Activated T-helper 2 cell treated with anti-CD3 and anti-CD28 coated beads, Interferon-gamma antibody, Interleukin-2, Interleukin-4, amounts not matched to agents 10 μg/mL and 5 μg/mL and 100 μg/mL, durations not matched to agents 14 hours and 24 hours and 36 hours (primary cell): ENCODE measurements at regions of chr19 and their contacts with region 1.

Region 1: DNA sequence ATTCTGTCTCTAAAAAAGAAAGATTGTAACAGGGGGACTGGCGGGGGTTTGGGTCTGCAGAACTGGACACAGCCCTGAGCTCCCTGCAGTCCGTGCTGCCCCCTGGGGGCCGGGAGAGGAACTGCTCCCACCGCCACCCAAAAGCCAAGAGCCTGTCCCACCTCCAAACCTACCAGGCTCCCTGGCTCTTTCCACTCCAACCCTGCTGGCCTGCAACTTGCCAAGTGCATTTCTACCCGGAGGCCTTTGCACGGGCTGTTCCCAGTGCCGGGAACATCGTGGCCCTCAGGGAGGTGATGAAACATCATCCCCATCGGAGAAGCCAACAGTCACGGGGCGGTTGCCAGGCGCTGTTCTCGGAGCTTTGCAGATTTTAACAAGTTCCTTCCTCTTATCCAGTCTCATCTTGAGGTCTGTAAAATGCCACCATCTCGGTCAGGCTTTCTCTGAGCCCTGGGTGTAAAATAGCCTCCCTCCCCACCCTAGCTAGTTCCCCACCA is 50.7 kb downstream of the SMIM24 start:
- DNase-seq: peak; percentile 68
- H3K4me3 Mint-ChIP-seq: no peak overlapping the region
- H3K27ac Mint-ChIP-seq: no peak overlapping the region
- H3K4me1 Mint-ChIP-seq: peaks cover 5% of the 10 kb centered on the region
- H3K27me3 Mint-ChIP-seq: no peaks in the 10 kb centered on the region

Region 2: DNA sequence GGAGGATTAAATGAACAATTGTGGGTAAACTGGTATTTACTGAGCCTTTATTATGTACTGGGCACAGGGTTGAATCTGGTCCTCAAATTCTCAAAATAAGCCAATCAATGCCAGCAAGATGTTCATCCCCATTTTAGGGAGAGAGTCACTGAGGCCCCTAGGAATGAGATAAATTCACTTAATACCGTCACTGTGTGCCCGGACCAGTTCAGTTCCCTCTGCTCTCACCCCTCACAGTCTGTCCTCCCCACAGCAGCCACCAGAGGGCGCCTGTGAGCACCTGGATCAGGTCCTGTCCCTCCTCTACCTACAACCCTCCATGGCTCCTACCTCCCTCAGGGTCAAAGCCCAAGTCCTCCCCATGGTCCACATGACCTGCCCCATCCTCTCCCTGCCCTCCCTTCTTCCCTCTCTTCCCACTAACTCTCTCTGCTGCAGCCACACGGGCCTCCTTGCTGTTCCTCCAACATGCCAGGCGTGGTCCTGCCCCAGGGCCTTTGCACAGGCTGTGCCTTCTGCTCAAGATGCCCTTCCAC is 105.2 kb before region 1 on chr19:
- intact Hi-C with region 1: loop called (anchors 1 kb)
- DNase-seq: peak; percentile 54
- H3K4me3 Mint-ChIP-seq: no peak overlapping the region
- H3K27ac Mint-ChIP-seq: no peak overlapping the region
- H3K4me1 Mint-ChIP-seq: no peaks in the 10 kb centered on the region
- H3K27me3 Mint-ChIP-seq: peaks cover 4% of the 10 kb centered on the region

Region 3: GRCh38 chr19:3413796-3414327 is 15.8 kb before region 1 on chr19:
- intact Hi-C with region 1: no loop called
- DNase-seq: no peak
- H3K4me3 Mint-ChIP-seq: no peak overlapping the region
- H3K27ac Mint-ChIP-seq: no peak overlapping the region
- H3K4me1 Mint-ChIP-seq: no peaks in the 10 kb centered on the region
- H3K27me3 Mint-ChIP-seq: no peaks in the 10 kb centered on the region

Region 4: DNA sequence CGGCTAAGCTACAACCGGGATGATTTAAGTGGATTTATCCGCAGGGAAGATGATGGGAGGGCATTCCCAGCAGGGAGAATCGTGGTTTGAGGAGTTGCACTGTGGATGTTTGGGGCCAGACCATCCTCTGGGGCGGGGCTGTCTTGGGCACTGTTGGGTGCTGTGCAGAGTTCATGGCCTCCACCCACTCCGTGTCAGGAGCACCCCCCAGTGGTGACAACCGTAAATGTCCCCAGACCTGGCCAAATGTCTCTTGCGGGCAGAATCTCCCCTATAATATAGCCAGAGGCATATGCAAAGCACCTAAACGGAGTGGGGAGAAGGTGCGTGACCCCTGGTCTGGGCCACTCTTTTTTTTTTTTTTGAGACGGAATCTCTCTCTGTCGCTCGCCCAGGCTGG is 10.5 kb after region 1 on chr19:
- intact Hi-C with region 1: no loop called
- DNase-seq: peak; percentile 33
- H3K4me3 Mint-ChIP-seq: no peak overlapping the region
- H3K27ac Mint-ChIP-seq: no peak overlapping the region
- H3K4me1 Mint-ChIP-seq: peaks cover 4% of the 10 kb centered on the region
- H3K27me3 Mint-ChIP-seq: no peaks in the 10 kb centered on the region

Region 5: GRCh38 chr19:3626473-3627350 is 197.1 kb after region 1 on chr19 and contains the start of gene CACTIN:
- intact Hi-C with region 1: no loop called
- DNase-seq: peak; percentile 97
- H3K4me3 Mint-ChIP-seq: peak within 1 kb of the TSS; percentile 96
- H3K27ac Mint-ChIP-seq: peak within 1 kb of the TSS; percentile 97
- H3K4me1 Mint-ChIP-seq: peaks cover 20% of the 10 kb centered on the region
- H3K27me3 Mint-ChIP-seq: no peaks in the 10 kb centered on the region
- total RNA-seq, gene CACTIN: 32.8 and 36.2 TPM in 2 replicates